CD8-positive, alpha-beta memory T cell (primary cell): ENCODE measurements at regions of chr13 and their contacts with region 1.

Region 1: GRCh38 chr13:99386911-99387788 is 80.0 kb upstream of the GPR183 start:
- DNase-seq: peak; percentile 69 to 87 (median 75)
- H3K4me3 ChIP-seq: no peak overlapping the region
- H3K4me3 Mint-ChIP-seq: peak overlapping the region in 5 of 7 donors; percentile 24 to 46 (median 33)
- H3K27ac ChIP-seq: no peak overlapping the region
- H3K27ac Mint-ChIP-seq: peak overlapping the region; percentile 81 to 95 (median 91)
- H3K4me1 ChIP-seq: peaks cover 66% of the 10 kb centered on the region
- H3K4me1 Mint-ChIP-seq: peaks cover 54 to 71% (median 56%) of the 10 kb centered on the region in 3 donors
- H3K27me3 ChIP-seq: no peaks in the 10 kb centered on the region
- H3K27me3 Mint-ChIP-seq: peaks cover 0 to 2% of the 10 kb centered on the region in 2 donors

Region 2: GRCh38 chr13:99322297-99323103 is 64.7 kb before region 1 on chr13:
- CTCF ChIA-PET with region 1: interaction called, 11 read pairs
- POLR2A ChIA-PET with region 1: interaction called, 4 read pairs
- DNase-seq: peak in 3 of 5 donors; percentile 48 to 61 (median 54)
- H3K4me3 ChIP-seq: peak overlapping the region; percentile 4
- H3K4me3 Mint-ChIP-seq: peak overlapping the region; percentile 14 to 80 (median 61)
- H3K27ac ChIP-seq: peak overlapping the region; percentile 7
- H3K27ac Mint-ChIP-seq: peak overlapping the region; percentile 90 to 98 (median 96)
- H3K4me1 ChIP-seq: peaks cover 78% of the 10 kb centered on the region
- H3K4me1 Mint-ChIP-seq: peaks cover 71 to 88% (median 84%) of the 10 kb centered on the region in 3 donors
- H3K27me3 ChIP-seq: no peaks in the 10 kb centered on the region
- H3K27me3 Mint-ChIP-seq: no peaks in the 10 kb centered on the region

Region 3: DNA sequence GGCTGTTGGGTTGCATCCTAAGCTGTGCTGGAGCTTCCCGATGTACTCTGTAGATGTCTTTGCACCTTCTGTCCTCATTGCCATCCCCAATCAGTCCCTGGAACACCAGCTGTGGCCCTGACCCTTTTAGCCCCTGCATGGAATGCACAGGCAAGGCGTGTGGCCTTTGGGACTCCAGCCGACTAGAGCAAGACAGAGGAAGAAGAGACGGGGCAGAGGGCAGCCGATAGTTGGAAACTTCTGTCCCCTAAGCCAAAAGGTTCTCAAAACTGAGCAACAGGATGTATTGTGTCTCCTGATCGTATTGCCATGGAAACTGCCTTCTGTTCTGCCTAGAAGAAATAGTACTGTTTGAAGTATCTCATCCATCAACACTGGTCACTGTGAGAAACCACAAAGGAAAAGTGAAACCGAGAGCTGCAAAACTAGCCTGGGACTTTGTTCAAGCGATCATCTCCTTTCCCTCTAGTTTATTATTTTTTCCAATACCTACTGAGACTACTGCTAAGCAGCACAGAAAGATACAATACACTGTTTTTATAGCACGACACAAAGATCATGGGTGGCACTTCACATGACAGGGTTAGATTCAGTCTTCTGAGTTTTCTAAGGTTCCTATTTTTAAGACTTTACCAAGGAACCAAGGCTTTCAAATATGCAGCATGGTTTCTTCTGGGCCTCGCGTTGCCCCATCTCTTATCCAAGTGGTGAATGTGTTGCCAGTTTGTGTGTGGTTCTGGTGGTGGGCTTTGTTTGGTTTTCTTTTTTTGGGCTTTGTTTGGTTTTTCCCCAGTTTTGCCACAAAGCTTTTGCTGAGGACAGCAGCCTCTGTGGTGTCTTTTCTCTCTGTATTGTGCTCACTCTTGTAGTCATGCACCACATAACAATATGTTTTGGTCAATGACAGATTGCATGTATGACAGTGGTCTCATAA is 30.7 kb before region 1 on chr13:
- CTCF ChIA-PET with region 1: interaction called, 24 read pairs
- POLR2A ChIA-PET with region 1: interaction called, 9 read pairs
- DNase-seq: peak in 4 of 5 donors; percentile 55 to 92 (median 88)
- H3K4me3 ChIP-seq: peak overlapping the region; percentile 43
- H3K4me3 Mint-ChIP-seq: peak overlapping the region; percentile 2 to 79 (median 72)
- H3K27ac ChIP-seq: peak overlapping the region; percentile 96
- H3K27ac Mint-ChIP-seq: peak overlapping the region; percentile 96 to 100 (median 99)
- H3K4me1 ChIP-seq: peaks cover 97% of the 10 kb centered on the region
- H3K4me1 Mint-ChIP-seq: peaks cover 97 to 100% (median 100%) of the 10 kb centered on the region in 3 donors
- H3K27me3 ChIP-seq: no peaks in the 10 kb centered on the region
- H3K27me3 Mint-ChIP-seq: no peaks in the 10 kb centered on the region

Region 4: DNA sequence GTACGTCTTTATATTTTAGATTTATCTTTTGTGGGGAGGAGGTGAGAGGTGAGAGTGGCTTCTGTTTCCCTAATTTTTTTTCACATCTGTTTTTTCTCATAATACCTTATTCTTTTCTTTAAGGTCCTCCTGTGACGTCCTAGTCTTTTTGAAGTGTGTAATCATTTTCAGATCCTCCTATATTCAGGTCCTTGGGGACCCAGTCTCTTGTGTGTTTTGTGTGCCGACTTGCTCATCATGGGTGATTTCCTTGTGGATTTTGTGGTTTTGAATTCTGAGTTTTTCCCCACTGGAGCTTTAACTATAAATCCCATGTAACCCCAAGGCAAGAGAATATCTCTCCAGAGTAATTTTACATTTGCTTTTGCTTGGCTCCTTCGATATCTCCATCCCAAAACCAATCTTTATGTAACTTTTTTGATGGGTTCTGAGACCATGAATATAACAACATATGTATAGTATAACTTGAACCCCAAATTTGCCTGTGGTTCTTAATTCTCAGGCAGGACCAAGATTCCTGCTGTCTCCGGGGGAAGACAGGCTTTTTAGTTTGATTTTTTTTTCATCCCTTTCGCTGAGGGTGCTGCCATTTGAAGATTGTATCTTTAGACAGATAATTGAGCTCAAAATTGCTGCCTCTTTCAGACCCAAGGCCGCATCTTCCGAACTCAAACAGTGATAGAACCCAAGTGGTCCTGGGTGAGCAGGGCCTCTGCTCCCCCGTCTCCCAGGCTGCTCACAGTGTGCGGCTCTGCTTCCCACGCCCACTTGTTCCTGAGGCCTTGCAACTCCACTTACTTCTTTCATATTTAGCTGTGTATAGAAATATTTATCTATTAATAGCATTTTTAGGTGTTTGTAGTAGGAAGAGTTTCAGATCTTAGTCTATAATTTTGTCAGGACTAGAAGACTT is 20.8 kb before region 1 on chr13:
- CTCF ChIA-PET with region 1: interaction called, 24 read pairs
- POLR2A ChIA-PET with region 1: interaction called, 11 read pairs
- DNase-seq: no peak
- H3K4me3 ChIP-seq: peak overlapping the region; percentile 2
- H3K4me3 Mint-ChIP-seq: peak overlapping the region; percentile 31 to 89 (median 75)
- H3K27ac ChIP-seq: peak overlapping the region; percentile 44
- H3K27ac Mint-ChIP-seq: peak overlapping the region; percentile 91 to 98 (median 96)
- H3K4me1 ChIP-seq: peaks cover 94% of the 10 kb centered on the region
- H3K4me1 Mint-ChIP-seq: peaks cover 76 to 97% (median 96%) of the 10 kb centered on the region in 3 donors
- H3K27me3 ChIP-seq: no peaks in the 10 kb centered on the region
- H3K27me3 Mint-ChIP-seq: no peaks in the 10 kb centered on the region

Region 5: GRCh38 chr13:99374994-99375737 is 12.0 kb before region 1 on chr13:
- CTCF ChIA-PET with region 1: interaction called, 24 read pairs
- POLR2A ChIA-PET with region 1: interaction called, 11 read pairs
- DNase-seq: peak in 4 of 5 donors; percentile 37 to 91 (median 88)
- H3K4me3 ChIP-seq: peak overlapping the region; percentile 15
- H3K4me3 Mint-ChIP-seq: peak overlapping the region; percentile 55 to 83 (median 75)
- H3K27ac ChIP-seq: peak overlapping the region; percentile 33
- H3K27ac Mint-ChIP-seq: peak overlapping the region; percentile 92 to 99 (median 97)
- H3K4me1 ChIP-seq: peaks cover 90% of the 10 kb centered on the region
- H3K4me1 Mint-ChIP-seq: peaks cover 82 to 98% (median 97%) of the 10 kb centered on the region in 3 donors
- H3K27me3 ChIP-seq: no peaks in the 10 kb centered on the region
- H3K27me3 Mint-ChIP-seq: peaks cover 0 to 4% of the 10 kb centered on the region in 2 donors